Cardiac septum (tissue), 1 donor: ENCODE measurements at regions of chr3 and their contacts with region 1.

Region 1: DNA sequence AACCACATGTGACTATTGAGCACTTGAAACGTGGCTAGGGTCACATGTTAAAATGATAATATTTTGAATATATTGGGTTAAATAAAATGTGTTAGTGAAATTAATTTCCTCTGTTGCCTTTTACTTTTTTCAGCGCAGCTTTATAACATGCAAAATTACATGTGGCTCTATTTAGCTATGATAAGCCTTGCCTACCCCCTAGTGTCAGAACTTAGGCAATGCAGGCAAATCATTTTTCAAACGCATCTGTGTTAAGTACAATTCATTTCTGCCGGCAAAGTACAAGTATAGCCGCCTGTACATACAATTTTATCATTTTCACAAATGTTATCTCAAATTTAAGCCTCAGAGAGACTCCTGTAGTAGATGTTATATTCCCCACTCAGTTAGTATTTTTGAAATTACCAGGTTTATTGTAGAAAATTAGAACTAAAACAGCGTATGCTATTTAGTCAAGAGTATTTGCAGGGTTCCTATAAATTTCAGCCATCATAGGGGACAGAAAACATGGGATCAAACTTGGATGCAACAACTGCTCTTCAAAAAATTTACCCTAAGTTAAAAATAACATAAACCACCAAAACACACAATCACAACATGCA is 56.1 kb downstream of the TAFA4 start:
- DNase-seq: no peak

Region 2: DNA sequence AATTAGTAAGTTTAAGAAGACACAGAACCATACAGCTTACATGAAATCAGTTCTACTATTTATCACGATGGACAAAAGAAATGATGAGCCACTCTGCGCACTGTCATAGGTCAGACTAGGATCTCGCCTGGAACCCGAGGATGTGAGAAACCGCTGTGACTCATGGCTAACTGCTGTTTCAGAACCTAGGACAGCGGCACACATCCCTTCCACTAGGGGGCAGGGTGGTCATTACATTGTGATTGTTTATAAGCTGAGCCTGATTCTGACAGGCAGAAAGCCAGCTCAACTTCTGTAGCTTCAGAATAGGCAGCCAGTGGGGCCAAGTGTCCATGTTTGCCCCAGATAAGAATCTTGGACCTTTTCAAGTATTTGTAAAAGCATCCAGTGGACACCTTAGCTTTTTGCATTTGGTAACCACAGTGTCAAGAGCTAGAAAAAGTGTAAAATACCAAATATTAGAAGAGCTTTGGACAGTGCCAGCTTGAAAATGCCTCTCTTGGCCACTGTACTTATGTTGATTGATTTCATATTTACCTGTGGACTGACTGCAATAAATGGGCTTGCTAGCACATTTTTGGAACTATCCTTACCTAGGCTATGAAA is 1762.3 kb before region 1 on chr3:
- intact Hi-C with region 1: loop called (anchors 10 kb)
- DNase-seq: peak; percentile 78

Region 3: GRCh38 chr3:67384760-67385397 is 1491.3 kb before region 1 on chr3:
- intact Hi-C with region 1: loop called (anchors 5 kb)
- DNase-seq: no peak

Region 4: GRCh38 chr3:67819447-67819846 is 1056.8 kb before region 1 on chr3:
- intact Hi-C with region 1: loop called (anchors 10 kb)
- DNase-seq: no peak